ENCODE measurements at regions of chr11 and their contacts with region 1.

Region 1: GRCh38 chr11:130427581-130428315 is 661 bp downstream of the ADAMTS8 start:
- DNase-seq: peak in 1 of 2 experiments; percentile 80
- H3K4me3 ChIP-seq: peak overlapping the region; percentile 40 to 71 (median 44)
- H3K27ac ChIP-seq: no peak overlapping the region
- H3K4me1 ChIP-seq: peaks cover 0 to 13% (median 9%) of the 10 kb centered on the region in 4 experiments; a peak in 6 of 7 replicates
- H3K27me3 ChIP-seq: peaks cover 2 to 38% (median 37%) of the 10 kb centered on the region in 4 experiments
- CTCF ChIP-seq: peak in 2 of 3 experiments; percentile 26 to 59; a peak in 2 of 4 replicates
- EP300 ChIP-seq: no peak
- POLR2A ChIP-seq: no peak
- RAD21 ChIP-seq: peak; percentile 44 to 60

Region 2: GRCh38 chr11:130213143-130213978 is 214.4 kb before region 1 on chr11:
- CTCF ChIA-PET with region 1: interaction called, 22 read pairs
- POLR2A ChIA-PET with region 1: interaction called, 5 read pairs
- DNase-seq: peak; percentile 31 to 96
- H3K4me3 ChIP-seq: no peak overlapping the region
- H3K27ac ChIP-seq: no peak overlapping the region
- H3K4me1 ChIP-seq: peaks cover 0 to 16% (median 12%) of the 10 kb centered on the region in 4 experiments; a peak in 6 of 7 replicates
- H3K27me3 ChIP-seq: no peaks in the 10 kb centered on the region
- CTCF ChIP-seq: peak; percentile 90 to 96 (median 94)
- EP300 ChIP-seq: no peak
- POLR2A ChIP-seq: no peak
- RAD21 ChIP-seq: peak; percentile 99

Region 3: GRCh38 chr11:130379276-130379675 is 48.5 kb before region 1 on chr11:
- CTCF ChIA-PET with region 1: interaction called, 10 read pairs
- POLR2A ChIA-PET with region 1: interaction called, 6 read pairs
- DNase-seq: no peak
- H3K4me3 ChIP-seq: no peak overlapping the region
- H3K27ac ChIP-seq: peak overlapping the region; percentile 6; the same call in 1 of the 2 replicates
- H3K4me1 ChIP-seq: peaks cover 10 to 25% (median 20%) of the 10 kb centered on the region in 4 experiments
- H3K27me3 ChIP-seq: no peaks in the 10 kb centered on the region
- CTCF ChIP-seq: no peak
- EP300 ChIP-seq: no peak
- POLR2A ChIP-seq: no peak
- RAD21 ChIP-seq: no peak

Region 4: DNA sequence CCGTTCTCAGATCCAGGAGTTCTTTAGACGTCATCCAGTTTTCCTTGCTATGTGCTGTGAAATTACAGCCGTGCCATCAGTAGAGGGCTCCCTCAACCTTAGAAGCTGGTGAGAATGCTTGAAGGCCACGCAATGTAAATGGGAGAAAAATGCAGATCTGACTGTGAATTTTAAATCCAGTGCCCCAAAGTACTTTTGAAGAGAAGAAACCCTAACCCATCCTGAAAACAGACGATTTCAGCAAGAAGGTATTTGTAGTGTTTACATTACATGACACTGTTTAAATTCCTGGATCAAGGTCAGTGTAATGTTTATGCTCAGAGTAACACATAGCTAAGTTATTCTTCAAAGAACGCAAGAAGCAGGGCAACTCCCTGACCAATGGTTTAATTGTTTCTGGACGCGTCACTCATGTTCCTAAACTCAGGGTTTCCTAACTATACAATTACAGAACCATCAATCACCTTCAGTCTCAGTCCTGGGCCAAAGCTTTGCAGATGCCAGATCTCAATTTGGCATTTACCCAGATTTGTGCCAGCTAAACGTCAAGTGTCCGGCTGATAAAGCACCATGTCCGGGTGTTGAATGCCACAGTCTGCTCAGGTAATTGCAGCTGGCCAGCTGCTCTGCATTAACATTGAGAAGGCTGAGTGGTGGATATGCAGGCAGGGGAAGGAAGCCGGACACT is 37.5 kb before region 1 on chr11:
- CTCF ChIA-PET with region 1: interaction called, 14 read pairs
- POLR2A ChIA-PET with region 1: no interaction called
- DNase-seq: no peak
- H3K4me3 ChIP-seq: no peak overlapping the region
- H3K27ac ChIP-seq: no peak overlapping the region
- H3K4me1 ChIP-seq: peaks cover 0 to 6% (median 1%) of the 10 kb centered on the region in 4 experiments; a peak in 3 of 7 replicates
- H3K27me3 ChIP-seq: no peaks in the 10 kb centered on the region; a peak in 1 of 7 replicates
- CTCF ChIP-seq: peak; percentile 1 to 61 (median 55)
- EP300 ChIP-seq: no peak
- POLR2A ChIP-seq: no peak
- RAD21 ChIP-seq: peak; percentile 63 to 71

Region 5: DNA sequence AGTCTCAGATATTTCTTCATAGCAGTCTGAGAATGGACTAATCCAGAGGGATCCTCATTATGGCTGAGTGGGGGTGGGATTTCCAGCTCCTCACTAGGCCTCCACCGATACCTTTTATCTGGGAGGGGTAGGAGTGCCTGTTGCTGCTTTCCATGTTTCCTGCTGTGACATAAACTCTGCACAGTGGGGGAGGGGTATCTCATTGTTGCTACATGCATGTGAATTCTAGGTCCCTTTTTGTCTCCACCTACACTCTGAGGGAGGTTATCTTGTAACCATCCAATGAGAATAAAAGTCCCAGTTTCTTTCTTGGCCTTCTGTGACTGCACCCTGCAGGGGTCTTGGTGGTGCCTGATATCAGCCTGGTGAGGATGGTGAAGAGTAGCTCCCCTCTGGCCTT is 81.2 kb after region 1 on chr11:
- CTCF ChIA-PET with region 1: no interaction called
- POLR2A ChIA-PET with region 1: no interaction called
- DNase-seq: no peak
- H3K4me3 ChIP-seq: no peak overlapping the region
- H3K27ac ChIP-seq: no peak overlapping the region
- H3K4me1 ChIP-seq: no peaks in the 10 kb centered on the region; a peak in 1 of 7 replicates
- H3K27me3 ChIP-seq: no peaks in the 10 kb centered on the region
- CTCF ChIP-seq: no peak
- EP300 ChIP-seq: no peak
- POLR2A ChIP-seq: no peak
- RAD21 ChIP-seq: no peak

Measured in H1 (cell line).